ENCODE measurements at regions of chr1 and their contacts with region 1.

Region 1: GRCh38 chr1:82079607-82080006 is 278.9 kb downstream of the ADGRL2 start:
- DNase-seq: no peak

Region 2: DNA sequence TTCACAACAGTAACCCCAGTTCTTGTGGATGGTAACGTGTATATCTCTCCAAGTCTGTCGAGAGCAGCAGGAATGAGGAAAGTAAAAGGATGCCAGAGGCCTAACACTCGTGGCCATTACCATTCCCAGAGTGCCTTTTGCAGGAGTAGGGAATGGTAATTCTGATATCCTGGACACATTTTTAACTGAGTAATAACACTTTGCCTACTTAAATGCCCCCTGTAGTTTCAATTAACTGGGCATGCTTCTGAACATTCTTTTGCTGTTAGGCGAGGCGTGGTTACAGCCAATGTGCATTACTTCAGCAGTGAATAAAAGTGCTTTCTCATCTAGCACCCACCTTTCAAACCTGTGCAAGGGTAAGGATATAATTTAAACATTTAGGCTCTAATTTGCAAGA is 537.4 kb before region 1 on chr1:
- intact Hi-C with region 1: loop called in 1 of 2 experiments (anchors 5 kb)
- DNase-seq: no peak

Measured in posterior vena cava (tissue), 2 donors.